CD8-positive, alpha-beta T cell (primary cell): ENCODE measurements at regions of chr3 and their contacts with region 1.

Region 1: GRCh38 chr3:112365636-112366035 is 32.7 kb downstream of the CD200 start:
- DNase-seq: no peak
- ATAC-seq: no peak
- H3K4me3 ChIP-seq: no peak overlapping the region
- H3K4me3 Mint-ChIP-seq: no peak overlapping the region
- H3K27ac ChIP-seq: no peak overlapping the region
- H3K27ac Mint-ChIP-seq: no peak overlapping the region
- H3K4me1 ChIP-seq: no peaks in the 10 kb centered on the region
- H3K4me1 Mint-ChIP-seq: peaks cover 15% of the 10 kb centered on the region
- H3K27me3 ChIP-seq: no peaks in the 10 kb centered on the region
- H3K27me3 Mint-ChIP-seq: no peaks in the 10 kb centered on the region
- CTCF ChIP-seq: no peak

Region 2: DNA sequence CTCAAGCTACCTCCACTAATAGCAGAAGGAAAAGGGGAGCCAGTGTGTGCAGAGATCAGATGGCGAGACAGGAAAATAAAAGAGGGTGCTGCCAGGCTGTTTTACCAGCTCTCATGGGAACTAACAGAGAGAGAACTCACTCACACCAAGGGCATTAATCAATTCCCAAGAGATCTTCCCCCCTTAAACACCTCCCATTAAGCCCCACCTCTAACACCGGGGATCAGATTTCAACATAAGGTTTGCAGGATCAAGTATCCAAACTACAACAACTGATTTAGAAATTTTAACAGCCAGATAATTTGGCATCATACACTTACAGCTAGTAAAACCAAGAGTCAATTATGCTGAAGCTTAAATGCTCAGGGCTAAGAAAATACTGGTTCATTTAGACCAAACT is 13.8 kb before region 1 on chr3:
- CTCF ChIA-PET with region 1: no interaction called
- POLR2A ChIA-PET with region 1: no interaction called
- intact Hi-C with region 1: loop called in 1 of 2 experiments (anchors 2 kb)
- DNase-seq: no peak
- ATAC-seq: no peak
- H3K4me3 ChIP-seq: no peak overlapping the region
- H3K4me3 Mint-ChIP-seq: no peak overlapping the region
- H3K27ac ChIP-seq: no peak overlapping the region
- H3K27ac Mint-ChIP-seq: no peak overlapping the region
- H3K4me1 ChIP-seq: no peaks in the 10 kb centered on the region
- H3K4me1 Mint-ChIP-seq: no peaks in the 10 kb centered on the region
- H3K27me3 ChIP-seq: no peaks in the 10 kb centered on the region
- H3K27me3 Mint-ChIP-seq: no peaks in the 10 kb centered on the region
- CTCF ChIP-seq: no peak

Region 3: GRCh38 chr3:112676659-112677234 is 311.1 kb after region 1 on chr3:
- CTCF ChIA-PET with region 1: no interaction called
- POLR2A ChIA-PET with region 1: no interaction called
- intact Hi-C with region 1: no loop called
- DNase-seq: peak; percentile 21 to 80 (median 69)
- ATAC-seq: peak; percentile 86
- H3K4me3 ChIP-seq: no peak overlapping the region
- H3K4me3 Mint-ChIP-seq: peak overlapping the region; percentile 27
- H3K27ac ChIP-seq: no peak overlapping the region
- H3K27ac Mint-ChIP-seq: peak overlapping the region; percentile 62
- H3K4me1 ChIP-seq: peaks cover 18% of the 10 kb centered on the region
- H3K4me1 Mint-ChIP-seq: peaks cover 41% of the 10 kb centered on the region
- H3K27me3 ChIP-seq: no peaks in the 10 kb centered on the region
- H3K27me3 Mint-ChIP-seq: peaks cover 3% of the 10 kb centered on the region
- CTCF ChIP-seq: no peak